ENCODE measurements at regions of chr9 and their contacts with region 1.

Region 1: DNA sequence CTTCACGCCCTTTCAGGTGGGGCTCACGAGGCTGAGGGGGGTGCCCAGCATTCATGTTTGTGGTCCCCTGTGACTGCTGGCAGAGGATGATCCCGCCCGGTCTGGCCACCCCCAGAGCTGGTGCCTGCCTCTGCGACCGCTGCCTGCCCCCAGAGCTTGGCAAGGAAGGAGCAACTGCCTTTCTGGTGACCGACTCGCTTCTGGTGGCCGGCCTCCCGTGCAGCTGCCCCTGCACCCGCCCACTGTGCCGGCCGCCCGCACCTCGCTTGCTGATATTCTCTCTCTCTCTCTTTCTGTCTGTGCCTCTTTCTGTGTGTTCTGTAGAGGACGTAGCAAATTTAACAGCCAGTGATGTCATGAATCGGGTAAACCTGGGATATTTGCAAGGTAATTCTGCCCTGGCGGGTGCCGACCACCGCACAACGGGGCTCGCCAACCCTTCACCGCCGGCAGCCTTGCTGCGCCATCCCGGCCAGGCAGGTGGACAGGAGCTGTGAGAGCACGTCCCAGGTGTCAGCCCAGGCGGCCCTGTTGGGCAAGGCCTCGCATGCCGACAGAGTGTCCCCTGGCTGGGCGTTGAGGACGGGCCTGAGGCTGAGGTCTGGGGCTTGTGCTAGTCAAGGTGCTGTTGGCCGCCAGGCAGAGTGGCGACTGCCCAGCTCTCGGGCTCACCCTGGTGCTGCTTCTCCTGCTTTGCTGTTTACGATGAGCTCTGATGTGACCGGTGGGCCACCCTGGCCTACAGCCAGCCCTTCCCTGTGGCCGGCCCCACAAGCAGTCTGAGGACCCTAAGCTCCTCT is 86.0 kb downstream of the KCNT1 start:
- DNase-seq: no peak
- H3K4me3 ChIP-seq: no peak overlapping the region
- H3K27ac ChIP-seq: no peak overlapping the region
- H3K4me1 ChIP-seq: no peaks in the 10 kb centered on the region
- H3K27me3 ChIP-seq: no peaks in the 10 kb centered on the region
- CTCF ChIP-seq: no peak

Region 2: GRCh38 chr9:135819905-135820304 is 31.9 kb after region 1 on chr9:
- CTCF ChIA-PET with region 1: no interaction called
- dilution Hi-C with region 1: loop called (anchors 5 kb)
- in situ Hi-C with region 1: no loop called
- intact Hi-C with region 1: no loop called
- DNase-seq: no peak
- H3K4me3 ChIP-seq: no peak overlapping the region
- H3K27ac ChIP-seq: no peak overlapping the region
- H3K4me1 ChIP-seq: no peaks in the 10 kb centered on the region
- H3K27me3 ChIP-seq: no peaks in the 10 kb centered on the region
- CTCF ChIP-seq: peak in 1 of 2 donors; percentile 10